ENCODE measurements at regions of chr10 and their contacts with region 1.

Region 1: DNA sequence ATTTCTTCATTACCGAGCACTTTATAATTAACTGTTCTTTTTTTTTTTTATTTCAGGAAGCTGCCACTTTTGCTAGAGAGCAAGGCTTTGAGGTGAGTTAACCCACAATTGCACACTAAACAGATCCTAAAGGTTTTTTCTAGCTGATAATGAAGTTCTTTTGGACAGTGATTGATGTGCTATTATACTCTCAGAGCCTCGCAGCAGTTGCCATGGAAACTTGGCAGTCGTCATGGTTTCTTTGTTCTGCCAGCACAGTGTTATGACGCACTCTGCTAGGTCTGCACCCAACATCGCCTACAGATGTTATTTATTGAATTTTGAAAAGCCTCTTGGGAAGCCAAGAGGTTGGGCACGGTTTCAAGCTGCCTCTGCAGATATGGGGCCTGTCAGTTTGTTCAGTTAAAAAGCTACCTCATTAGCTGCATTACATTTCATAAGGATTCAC is 237.2 kb upstream of the KAT6B start:
- DNase-seq: peak; percentile 66
- H3K4me3 ChIP-seq: no peak overlapping the region
- H3K27ac ChIP-seq: peak overlapping the region; percentile 71 to 96
- H3K4me1 ChIP-seq: peaks cover 25 to 40% of the 10 kb centered on the region in 2 experiments; a peak in 3 of 4 replicates
- H3K27me3 ChIP-seq: no peaks in the 10 kb centered on the region
- CTCF ChIP-seq: no peak
- EP300 ChIP-seq: peak; percentile 71 to 91; a peak in 3 of 4 replicates
- RAD21 ChIP-seq: peak; percentile 41

Region 2: GRCh38 chr10:74826142-74827044 is 237.1 kb after region 1 on chr10 and contains the start of gene KAT6B:
- CTCF ChIA-PET with region 1: interaction called, 3 read pairs
- POLR2A ChIA-PET with region 1: interaction called, 10 read pairs
- DNase-seq: peak; percentile 94
- H3K4me3 ChIP-seq: peak within 1 kb of the TSS; percentile 86 to 95
- H3K27ac ChIP-seq: peak within 1 kb of the TSS; percentile 94 to 97
- H3K4me1 ChIP-seq: peaks cover 30 to 31% of the 10 kb centered on the region in 2 experiments
- H3K27me3 ChIP-seq: no peaks in the 10 kb centered on the region
- CTCF ChIP-seq: peak; percentile 37; the same call in 1 of the 2 replicates
- EP300 ChIP-seq: peak; percentile 4 to 31; a peak in 3 of 4 replicates
- RAD21 ChIP-seq: peak; percentile 11; the same call in 1 of the 2 replicates
- polyA plus RNA-seq, gene KAT6B: 4.3 and 4.6 TPM in 2 replicates

Region 3: DNA sequence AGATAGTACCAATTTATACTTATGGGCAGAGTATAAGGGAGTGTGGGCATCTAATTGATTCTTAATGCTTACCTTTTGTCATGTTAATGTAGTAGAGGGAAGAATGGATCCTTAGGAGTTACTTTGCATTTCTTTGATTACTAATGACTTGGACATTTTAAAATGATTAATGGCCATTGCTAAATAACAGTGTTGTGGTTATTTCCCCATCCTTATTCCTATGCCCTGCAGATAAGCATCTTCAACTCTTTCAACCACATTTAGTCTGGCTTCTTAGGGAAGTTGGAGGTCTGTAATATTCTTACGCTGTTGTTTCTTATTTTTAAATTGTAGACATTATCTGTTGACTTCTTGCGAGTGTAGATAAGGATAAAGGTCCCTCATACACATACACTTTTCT is 274.3 kb after region 1 on chr10:
- CTCF ChIA-PET with region 1: no interaction called
- POLR2A ChIA-PET with region 1: no interaction called
- DNase-seq: no peak
- H3K4me3 ChIP-seq: no peak overlapping the region
- H3K27ac ChIP-seq: no peak overlapping the region
- H3K4me1 ChIP-seq: peaks cover 4 to 8% of the 10 kb centered on the region in 2 experiments
- H3K27me3 ChIP-seq: no peaks in the 10 kb centered on the region
- CTCF ChIP-seq: no peak
- EP300 ChIP-seq: 0 out of 4 replicates have a peak, but pooled peaks of 1 of the 2 experiments have one; percentile 39
- RAD21 ChIP-seq: no peak

Measured in SK-N-SH (cell line).